ENCODE measurements at regions of chr17 and their contacts with region 1.

Region 1: GRCh38 chr17:69030145-69030544 is 30.6 kb downstream of the ABCA9 start:
- DNase-seq: no peak

Region 2: GRCh38 chr17:70483624-70484023 is 1453.5 kb after region 1 on chr17:
- intact Hi-C with region 1: loop called in 1 of 2 experiments (anchors 10 kb)
- DNase-seq: no peak